Adrenal gland (tissue), 19 donors: ENCODE measurements at regions of chr15 and their contacts with region 1.

Region 1: GRCh38 chr15:50765195-50765973 is at the start of gene SPPL2A:
- DNase-seq: peak; percentile 82 to 93 (median 87)
- H3K4me3 ChIP-seq: peak within 1 kb of the TSS; percentile 52 to 89 (median 66)
- H3K27ac ChIP-seq: peak within 1 kb of the TSS; percentile 77 to 98 (median 96)
- H3K4me1 ChIP-seq: peaks cover 8 to 26% of the 10 kb centered on the region in 2 donors
- H3K27me3 ChIP-seq: no peaks in the 10 kb centered on the region
- CTCF ChIP-seq: no peak
- POLR2A ChIP-seq: peak; percentile 89 to 92
- total RNA-seq, gene SPPL2A: 73.4 to 378 (median 143) TPM

Region 2: DNA sequence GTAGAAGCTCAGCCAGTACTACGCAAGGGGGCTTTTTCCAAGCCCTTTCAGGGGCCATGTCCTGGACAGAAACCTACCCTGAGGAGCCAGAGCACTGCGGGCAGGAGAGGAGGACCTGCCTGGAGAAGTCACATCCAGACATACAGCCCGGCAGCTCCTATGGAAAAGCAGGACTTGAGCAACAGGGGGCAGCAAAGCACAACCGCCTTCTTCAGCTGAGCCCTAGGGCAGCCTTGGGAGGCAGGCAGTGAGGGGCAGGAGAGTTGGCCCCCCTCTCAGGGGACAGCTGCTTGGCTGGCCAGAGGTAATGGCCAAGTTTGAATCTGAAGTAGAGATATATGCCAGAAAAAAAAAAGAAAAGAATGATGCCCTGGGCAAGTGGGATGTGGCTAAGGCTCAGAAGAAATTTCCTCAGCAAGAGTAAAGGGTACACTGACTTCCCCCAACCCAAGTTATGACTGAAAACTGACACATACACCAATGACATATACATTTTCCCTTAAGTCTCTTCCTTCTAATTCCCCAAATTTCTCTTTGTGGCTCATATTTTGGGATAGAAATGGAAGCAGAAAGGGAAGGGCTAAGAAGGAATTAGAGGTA is 516.1 kb after region 1 on chr15:
- intact Hi-C with region 1: loop called in 1 of 2 experiments (anchors 10 kb)
- DNase-seq: peak; percentile 32 to 81 (median 69)
- H3K4me3 ChIP-seq: no peak overlapping the region
- H3K27ac ChIP-seq: no peak overlapping the region
- H3K4me1 ChIP-seq: peaks cover 0 to 8% of the 10 kb centered on the region in 2 donors
- H3K27me3 ChIP-seq: no peaks in the 10 kb centered on the region
- CTCF ChIP-seq: peak; percentile 40 to 66 (median 60)
- POLR2A ChIP-seq: no peak